OCI-LY7 (cell line): ENCODE measurements at regions of chrX and their contacts with region 1.

Region 1: DNA sequence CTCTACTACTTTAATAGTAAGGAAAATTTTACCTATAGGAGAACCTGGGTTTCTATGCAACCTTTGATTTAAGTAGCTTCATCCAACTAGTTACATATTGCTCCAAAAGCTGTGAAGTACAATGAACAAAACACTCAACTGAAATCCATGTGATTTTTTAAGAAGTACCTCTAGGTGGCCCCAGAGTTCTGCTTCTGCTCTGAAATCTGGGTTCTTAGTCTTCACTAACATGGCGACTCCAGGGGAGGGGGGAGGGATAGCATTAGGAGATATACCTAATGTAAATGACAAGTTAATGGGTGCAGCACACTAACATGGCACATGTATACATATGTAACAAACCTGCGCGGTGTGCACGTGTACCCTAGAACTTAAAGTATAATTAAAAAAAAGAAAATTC is 73.4 kb upstream of the MAGEB2 start:
- DNase-seq: peak; percentile 27
- H3K4me3 ChIP-seq: no peak overlapping the region
- H3K27ac ChIP-seq: no peak overlapping the region
- H3K4me1 ChIP-seq: no peaks in the 10 kb centered on the region
- CTCF ChIP-seq: peak; percentile 55

Region 2: GRCh38 chrX:29935455-29935854 is 206.5 kb before region 1 on chrX:
- CTCF ChIA-PET with region 1: no interaction called
- POLR2A ChIA-PET with region 1: no interaction called
- intact Hi-C with region 1: no loop called
- DNase-seq: no peak
- H3K4me3 ChIP-seq: no peak overlapping the region
- H3K27ac ChIP-seq: no peak overlapping the region
- H3K4me1 ChIP-seq: no peaks in the 10 kb centered on the region
- CTCF ChIP-seq: no peak

Region 3: DNA sequence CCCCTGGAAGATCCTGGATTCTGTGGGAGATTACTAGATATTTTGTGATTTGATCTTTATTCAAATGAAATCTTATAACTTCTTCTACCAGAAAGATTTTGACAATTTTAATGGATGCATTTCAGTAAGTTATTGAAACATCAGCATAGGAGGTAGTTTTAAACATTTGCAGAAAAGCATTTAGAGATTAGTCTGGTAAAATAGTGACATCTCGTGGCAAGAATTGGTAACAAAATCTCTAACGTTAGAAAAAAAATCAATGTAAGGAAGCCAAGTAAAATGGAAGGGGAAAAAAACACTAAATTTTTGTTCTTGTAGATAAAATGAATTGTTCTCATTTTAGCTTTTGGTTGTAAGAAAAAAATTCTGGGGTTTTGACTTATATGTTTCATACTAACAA is 362.3 kb after region 1 on chrX:
- CTCF ChIA-PET with region 1: no interaction called
- POLR2A ChIA-PET with region 1: no interaction called
- intact Hi-C with region 1: loop called (anchors 5 kb)
- DNase-seq: peak; percentile 14
- H3K4me3 ChIP-seq: no peak overlapping the region
- H3K27ac ChIP-seq: no peak overlapping the region
- H3K4me1 ChIP-seq: no peaks in the 10 kb centered on the region
- CTCF ChIP-seq: peak; percentile 75